GM13976 (cell line): ENCODE measurements at regions of chr6 and their contacts with region 1.

Region 1: GRCh38 chr6:63941747-63942470 is 306.3 kb downstream of the PHF3 start:
- DNase-seq: no peak
- CTCF ChIP-seq: no peak

Region 2: GRCh38 chr6:63685446-63686379 is 256.2 kb before region 1 on chr6:
- in situ Hi-C with region 1: no loop called
- DNase-seq: peak; percentile 40
- CTCF ChIP-seq: no peak

Region 3: GRCh38 chr6:64081453-64081852 is 139.5 kb after region 1 on chr6:
- in situ Hi-C with region 1: no loop called
- DNase-seq: no peak
- CTCF ChIP-seq: no peak

Region 4: DNA sequence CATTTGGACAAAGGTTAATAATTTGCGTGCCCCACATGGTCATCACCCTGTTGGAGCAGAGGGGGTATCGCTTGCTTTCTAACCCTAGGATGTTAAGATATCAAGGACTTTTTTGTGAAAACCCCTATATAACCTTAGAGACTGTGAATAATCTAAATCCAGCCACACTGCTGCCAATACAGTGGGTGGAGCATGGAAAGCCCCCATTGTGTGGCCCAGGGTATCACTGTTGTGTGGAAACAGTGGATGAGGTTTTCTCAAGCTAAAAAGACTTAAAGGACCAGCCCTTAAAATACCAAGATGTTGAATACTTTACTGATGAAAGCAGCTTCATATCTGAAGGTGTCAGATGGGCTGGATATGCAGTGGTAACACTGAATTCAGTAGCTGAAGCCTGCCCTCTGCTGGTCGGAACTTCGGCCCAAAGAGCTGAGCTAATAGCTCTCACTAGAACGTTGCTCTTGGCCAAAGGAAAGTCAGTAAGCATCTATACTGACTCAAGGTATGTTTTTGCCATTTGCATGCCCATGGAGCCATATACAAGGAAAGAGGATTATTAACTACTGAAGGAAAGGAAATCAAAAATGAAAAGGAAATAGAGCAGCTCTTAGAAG is 388.9 kb after region 1 on chr6:
- in situ Hi-C with region 1: loop called (anchors 25 kb)
- DNase-seq: no peak
- CTCF ChIP-seq: peak; percentile 78